GM13976 (cell line): ENCODE measurements at regions of chr9 and their contacts with region 1.

Region 1: DNA sequence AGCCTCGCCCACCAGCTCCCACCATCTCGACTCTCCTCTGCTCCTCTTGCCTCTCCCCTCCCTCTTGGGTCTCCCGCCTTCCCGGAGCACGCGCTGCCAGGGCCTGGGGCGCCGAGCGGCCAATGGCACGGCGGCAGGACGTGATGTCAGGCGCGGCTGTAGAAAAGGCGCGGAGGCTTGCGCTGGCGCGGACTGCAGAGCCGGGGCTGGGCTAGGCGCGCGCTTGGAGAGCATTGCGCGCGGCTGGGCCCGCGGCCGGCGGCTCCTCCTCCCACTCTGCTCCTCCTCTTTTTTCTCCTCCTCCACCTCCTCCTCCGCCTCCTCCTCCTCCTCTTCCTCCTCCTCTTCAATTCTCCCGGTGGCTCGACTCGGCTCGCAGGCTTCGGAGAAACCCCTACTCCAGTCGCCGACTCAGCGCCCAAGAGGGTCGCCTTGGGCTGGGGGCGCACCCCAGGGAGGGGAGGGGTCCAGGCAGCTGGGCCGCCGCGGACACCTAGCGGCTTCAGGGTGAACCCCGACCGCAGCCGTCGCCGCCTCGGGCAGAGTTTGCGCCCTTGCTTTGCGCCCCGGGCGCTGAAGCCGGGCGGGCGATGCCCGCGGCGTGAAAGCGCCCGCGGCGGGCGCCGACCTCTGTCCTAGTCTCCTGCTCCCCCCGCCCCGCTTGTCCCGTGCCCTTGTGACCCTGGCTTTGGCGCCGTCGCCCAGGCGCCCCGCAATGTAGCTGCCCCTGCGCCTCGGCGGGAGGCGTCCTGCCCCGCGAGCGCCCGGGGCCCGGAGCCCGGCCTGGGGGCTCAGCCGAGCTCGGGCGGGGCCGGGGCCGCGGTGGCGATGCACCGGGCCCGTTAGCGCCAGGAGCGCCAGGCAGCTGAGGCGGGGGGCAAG is at the start of gene LHX2:
- DNase-seq: peak; percentile 82
- CTCF ChIP-seq: no peak

Region 2: DNA sequence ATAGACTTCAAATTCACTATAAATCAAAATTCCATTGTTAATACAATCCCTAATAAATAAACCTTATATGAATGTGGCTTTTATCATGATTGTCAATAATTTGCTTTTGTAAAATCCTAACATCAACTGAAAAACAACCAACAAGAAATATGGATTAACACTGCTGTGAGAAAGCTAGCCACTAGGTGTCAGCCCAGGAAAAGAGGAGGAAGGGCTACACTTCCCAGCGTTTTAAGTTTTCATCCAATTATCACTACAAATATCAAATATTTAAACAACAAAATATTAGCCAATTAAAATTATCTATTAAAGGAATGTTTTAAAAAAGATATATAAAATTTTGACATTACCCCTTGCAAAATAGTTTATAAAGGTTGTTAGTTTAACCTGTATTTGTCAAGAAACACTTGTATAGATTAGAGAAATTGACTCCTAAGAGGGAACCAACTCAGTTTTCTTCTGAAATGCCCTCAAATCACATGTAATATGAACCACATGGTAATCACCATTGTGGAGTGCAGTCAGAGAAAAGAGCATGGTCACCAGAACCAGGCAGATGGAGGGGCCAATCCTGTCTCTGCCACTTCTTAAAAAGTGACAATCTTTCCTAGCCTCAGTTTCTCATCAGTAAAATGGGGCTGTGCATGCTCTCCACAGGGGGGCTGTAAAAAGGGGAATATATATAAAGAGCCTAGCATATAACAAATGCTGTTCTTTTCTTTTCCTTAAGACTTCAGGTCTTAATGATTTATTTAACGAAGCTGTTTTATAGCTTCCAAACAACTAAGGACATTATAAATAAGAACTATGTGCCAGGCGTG is 467.4 kb before region 1 on chr9:
- in situ Hi-C with region 1: loop called (anchors 25 kb)
- DNase-seq: peak; percentile 59
- CTCF ChIP-seq: peak; percentile 63

Region 3: GRCh38 chr9:124270504-124271335 is 259.1 kb after region 1 on chr9:
- in situ Hi-C with region 1: no loop called
- DNase-seq: no peak
- CTCF ChIP-seq: no peak